ENCODE measurements at regions of chrX and their contacts with region 1.

Region 1: GRCh38 chrX:40153335-40154249 is 55.8 kb upstream of the BCOR start:
- DNase-seq: no peak
- H3K4me3 ChIP-seq: peak overlapping the region; percentile 29 to 36
- H3K27ac ChIP-seq: peak overlapping the region; percentile 69 to 80
- H3K4me1 ChIP-seq: peaks cover 3% of the 10 kb centered on the region
- H3K27me3 ChIP-seq: no peaks in the 10 kb centered on the region
- CTCF ChIP-seq: peak in 1 of 4 experiments; percentile 19
- POLR2A ChIP-seq: no peak

Region 2: GRCh38 chrX:39907964-39908616 is 245.5 kb before region 1 on chrX:
- intact Hi-C with region 1: loop called (anchors 10 kb)
- DNase-seq: peak; percentile 52
- H3K4me3 ChIP-seq: no peak overlapping the region
- H3K27ac ChIP-seq: no peak overlapping the region
- H3K4me1 ChIP-seq: no peaks in the 10 kb centered on the region
- H3K27me3 ChIP-seq: no peaks in the 10 kb centered on the region
- CTCF ChIP-seq: no peak
- POLR2A ChIP-seq: no peak

Region 3: GRCh38 chrX:40108959-40109287 is 44.7 kb before region 1 on chrX:
- intact Hi-C with region 1: loop called (anchors 5 kb)
- DNase-seq: peak; percentile 72
- H3K4me3 ChIP-seq: peak overlapping the region; percentile 51 to 61
- H3K27ac ChIP-seq: peak overlapping the region; percentile 86 to 95
- H3K4me1 ChIP-seq: no peaks in the 10 kb centered on the region
- H3K27me3 ChIP-seq: no peaks in the 10 kb centered on the region
- CTCF ChIP-seq: no peak
- POLR2A ChIP-seq: peak; percentile 44